ENCODE measurements at regions of chr19 and their contacts with region 1.

Region 1: DNA sequence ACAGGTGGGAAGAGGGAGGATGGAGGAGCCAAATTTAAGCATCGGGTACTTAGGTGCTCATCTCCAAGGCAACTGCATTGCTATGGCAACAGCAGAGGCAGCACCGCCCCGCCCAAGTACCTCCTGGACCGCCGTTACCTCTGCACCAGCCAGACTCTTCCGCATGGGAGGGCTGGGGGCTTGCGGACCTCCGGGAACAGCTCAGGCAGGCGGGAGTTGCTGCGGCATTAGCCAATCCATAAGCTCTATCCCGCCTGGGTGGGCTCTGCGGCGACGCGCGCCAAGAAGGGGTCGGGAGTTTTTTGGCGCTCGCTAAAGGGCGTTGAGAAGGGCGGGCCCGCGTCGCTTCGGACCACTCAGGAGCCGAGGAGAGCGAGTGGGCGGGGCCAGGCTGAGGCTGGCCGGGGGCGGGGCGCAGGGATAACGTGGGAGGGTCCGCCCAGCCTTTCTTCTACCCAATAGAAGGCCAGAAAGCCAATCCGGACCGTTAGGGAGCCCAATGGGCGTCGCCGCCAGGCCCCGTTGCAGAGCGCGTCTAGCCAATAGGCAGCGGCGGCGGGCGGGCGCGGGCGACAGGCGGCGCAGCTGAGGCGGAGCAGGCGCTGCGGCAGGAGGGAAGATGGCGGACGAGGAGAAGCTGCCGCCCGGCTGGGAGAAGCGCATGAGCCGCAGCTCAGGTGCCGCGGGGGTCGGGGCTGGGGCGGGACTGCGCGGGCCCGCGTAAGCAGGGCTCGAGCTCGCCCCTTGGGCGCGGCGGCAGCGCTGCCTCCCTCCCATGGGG is at the start of gene PIN1:
- DNase-seq: peak; percentile 96
- ATAC-seq: peak; percentile 98
- H3K4me3 ChIP-seq: peak within 1 kb of the TSS; percentile 84 to 98 (median 91)
- H3K27ac ChIP-seq: peak within 1 kb of the TSS; percentile 28
- H3K4me1 ChIP-seq: peaks cover 11% of the 10 kb centered on the region
- H3K27me3 ChIP-seq: no peaks in the 10 kb centered on the region; a peak in 1 of 5 replicates
- CTCF ChIP-seq: peak; percentile 78
- EP300 ChIP-seq: no peak
- POLR2A ChIP-seq: peak in 1 of 2 experiments; percentile 78; a peak in 2 of 4 replicates
- RAD21 ChIP-seq: no peak
- total RNA-seq, gene PIN1: 67.3 and 72.0 TPM in 2 replicates

Region 2: GRCh38 chr19:9818734-9819589 is 16.0 kb before region 1 on chr19 and contains the start of gene FBXL12:
- CTCF ChIA-PET with region 1: no interaction called
- POLR2A ChIA-PET with region 1: interaction called, 10 read pairs
- in situ Hi-C with region 1: no loop called
- intact Hi-C with region 1: no loop called
- DNase-seq: peak; percentile 97
- ATAC-seq: peak; percentile 87
- H3K4me3 ChIP-seq: peak within 1 kb of the TSS; percentile 81 to 95 (median 84)
- H3K27ac ChIP-seq: peak within 1 kb of the TSS; percentile 93
- H3K4me1 ChIP-seq: peaks cover 33% of the 10 kb centered on the region
- H3K27me3 ChIP-seq: no peaks in the 10 kb centered on the region; a peak in 1 of 5 replicates
- CTCF ChIP-seq: no peak
- EP300 ChIP-seq: no peak
- POLR2A ChIP-seq: peak; percentile 94 to 97
- RAD21 ChIP-seq: peak; percentile 32; the same call in 1 of the 2 replicates
- total RNA-seq, gene FBXL12: 19.0 and 20.4 TPM in 2 replicates

Region 3: DNA sequence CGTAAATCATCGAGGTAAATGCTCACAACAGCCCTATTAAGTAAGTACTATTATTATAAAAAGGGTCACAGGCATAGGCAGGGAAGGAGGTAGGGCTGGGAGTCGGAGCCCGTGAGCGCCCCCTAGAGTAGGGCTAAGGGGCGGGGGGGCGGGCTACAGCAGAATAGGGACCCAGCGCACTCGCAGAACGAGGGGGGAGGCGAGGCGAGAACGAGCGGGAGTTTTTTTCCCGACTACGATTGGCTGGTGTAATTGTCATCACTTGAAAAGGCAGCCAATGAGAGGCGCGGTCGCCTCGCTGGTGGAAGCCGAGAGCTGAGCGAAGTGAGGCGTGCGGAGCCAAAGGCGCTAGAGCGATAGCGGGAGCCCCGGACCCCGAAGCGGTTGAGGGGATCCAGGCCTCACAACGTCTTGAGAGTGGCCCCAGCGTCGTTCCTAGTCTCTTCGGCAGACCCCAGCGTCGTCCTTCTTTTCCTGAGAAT is 644.0 kb after region 1 on chr19:
- CTCF ChIA-PET with region 1: no interaction called
- POLR2A ChIA-PET with region 1: no interaction called
- in situ Hi-C with region 1: no loop called
- intact Hi-C with region 1: no loop called
- DNase-seq: peak; percentile 31
- ATAC-seq: peak; percentile 63
- H3K4me3 ChIP-seq: no peak overlapping the region
- H3K27ac ChIP-seq: no peak overlapping the region
- H3K4me1 ChIP-seq: peaks cover 8% of the 10 kb centered on the region; the same call in 1 of the 2 replicates
- H3K27me3 ChIP-seq: no peaks in the 10 kb centered on the region
- CTCF ChIP-seq: peak; percentile 31
- EP300 ChIP-seq: no peak
- POLR2A ChIP-seq: no peak
- RAD21 ChIP-seq: no peak

Measured in HepG2 (cell line).